CD8-positive, alpha-beta T cell (primary cell): ENCODE measurements at regions of chr17 and their contacts with region 1.

Region 1: DNA sequence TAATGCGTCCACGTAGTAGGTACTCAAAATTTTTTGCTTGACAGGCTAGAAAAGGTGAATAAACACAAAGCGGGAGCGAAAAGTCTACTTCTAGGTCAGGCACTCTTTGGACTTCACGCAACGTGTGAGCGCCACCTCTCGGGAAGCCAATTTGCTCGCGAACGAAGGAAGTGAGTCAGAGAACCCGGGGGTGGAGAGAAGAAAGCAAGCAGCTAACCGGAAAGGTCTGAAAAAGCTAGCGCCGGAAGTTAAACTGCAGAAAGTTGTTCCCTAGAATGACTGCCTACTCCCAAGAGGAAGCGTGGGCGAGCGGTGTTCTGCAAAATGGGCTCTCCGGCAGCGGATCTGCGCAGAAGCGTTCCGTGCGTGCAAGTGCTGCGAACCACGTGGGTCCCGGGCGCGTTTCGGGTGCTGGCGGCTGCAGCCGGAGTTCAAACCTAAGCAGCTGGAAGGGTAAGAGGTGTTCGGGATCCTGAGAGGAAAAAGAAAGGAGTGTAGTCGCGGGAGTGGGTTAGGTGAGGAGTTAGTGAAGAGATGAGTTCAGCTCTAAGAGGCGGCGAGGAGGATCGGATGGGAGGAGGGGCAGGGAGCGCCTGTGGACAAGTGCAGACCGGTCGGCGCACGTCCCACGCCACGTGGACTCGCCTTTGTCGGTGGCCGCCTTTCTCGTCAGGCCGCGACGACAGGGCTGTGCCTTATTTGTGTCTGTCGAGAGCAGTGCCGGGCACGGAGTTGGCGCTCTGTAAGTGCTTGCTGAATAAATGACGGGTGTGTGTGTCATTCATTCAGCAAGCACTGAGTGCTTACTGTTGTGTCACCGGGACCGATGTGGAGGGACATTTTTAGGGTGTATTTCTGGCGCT is at the start of gene NME1:
- DNase-seq: peak; percentile 94 to 99 (median 96)
- ATAC-seq: peak; percentile 92
- H3K4me3 ChIP-seq: peak within 1 kb of the TSS; percentile 70 to 75
- H3K4me3 Mint-ChIP-seq: no peak within 1 kb of the TSS
- H3K27ac ChIP-seq: peak within 1 kb of the TSS; percentile 58 to 77
- H3K27ac Mint-ChIP-seq: no peak within 1 kb of the TSS
- H3K4me1 ChIP-seq: peaks cover 22% of the 10 kb centered on the region
- H3K4me1 Mint-ChIP-seq: peaks cover 11% of the 10 kb centered on the region
- H3K27me3 ChIP-seq: no peaks in the 10 kb centered on the region
- H3K27me3 Mint-ChIP-seq: no peaks in the 10 kb centered on the region
- CTCF ChIP-seq: peak; percentile 67
- total RNA-seq, gene NME1: 11.3 to 12.1 TPM

Region 2: GRCh38 chr17:50783193-50783660 is 370.2 kb before region 1 on chr17:
- CTCF ChIA-PET with region 1: interaction called, 3 read pairs
- POLR2A ChIA-PET with region 1: no interaction called
- intact Hi-C with region 1: loop called (anchors 5 to 10 kb)
- DNase-seq: peak; percentile 62 to 87 (median 79)
- ATAC-seq: peak; percentile 81
- H3K4me3 ChIP-seq: no peak overlapping the region
- H3K4me3 Mint-ChIP-seq: no peak overlapping the region
- H3K27ac ChIP-seq: no peak overlapping the region
- H3K27ac Mint-ChIP-seq: no peak overlapping the region
- H3K4me1 ChIP-seq: peaks cover 19% of the 10 kb centered on the region
- H3K4me1 Mint-ChIP-seq: peaks cover 29% of the 10 kb centered on the region
- H3K27me3 ChIP-seq: no peaks in the 10 kb centered on the region
- H3K27me3 Mint-ChIP-seq: peaks cover 9% of the 10 kb centered on the region
- CTCF ChIP-seq: peak; percentile 92

Region 3: GRCh38 chr17:51000835-51001638 is 152.4 kb before region 1 on chr17:
- CTCF ChIA-PET with region 1: interaction called, 124 read pairs
- POLR2A ChIA-PET with region 1: interaction called, 23 read pairs
- intact Hi-C with region 1: loop called (anchors 1 kb)
- DNase-seq: peak in 3 of 9 experiments; percentile 14 to 81 (median 74)
- ATAC-seq: peak; percentile 88
- H3K4me3 ChIP-seq: no peak overlapping the region
- H3K4me3 Mint-ChIP-seq: no peak overlapping the region
- H3K27ac ChIP-seq: no peak overlapping the region
- H3K27ac Mint-ChIP-seq: no peak overlapping the region
- H3K4me1 ChIP-seq: no peaks in the 10 kb centered on the region
- H3K4me1 Mint-ChIP-seq: peaks cover 5% of the 10 kb centered on the region
- H3K27me3 ChIP-seq: no peaks in the 10 kb centered on the region
- H3K27me3 Mint-ChIP-seq: no peaks in the 10 kb centered on the region
- CTCF ChIP-seq: peak; percentile 76

Region 4: GRCh38 chr17:51056813-51057510 is 96.5 kb before region 1 on chr17:
- CTCF ChIA-PET with region 1: interaction called, 7 read pairs
- POLR2A ChIA-PET with region 1: no interaction called
- intact Hi-C with region 1: loop called in 1 of 2 experiments (anchors 5 kb)
- DNase-seq: peak in 2 of 9 experiments; percentile 46 to 61
- ATAC-seq: no peak
- H3K4me3 ChIP-seq: no peak overlapping the region
- H3K4me3 Mint-ChIP-seq: no peak overlapping the region
- H3K27ac ChIP-seq: no peak overlapping the region
- H3K27ac Mint-ChIP-seq: peak overlapping the region; percentile 50
- H3K4me1 ChIP-seq: no peaks in the 10 kb centered on the region
- H3K4me1 Mint-ChIP-seq: peaks cover 14% of the 10 kb centered on the region
- H3K27me3 ChIP-seq: no peaks in the 10 kb centered on the region
- H3K27me3 Mint-ChIP-seq: no peaks in the 10 kb centered on the region
- CTCF ChIP-seq: peak; percentile 48

Region 5: GRCh38 chr17:51166197-51166986 is 13.0 kb after region 1 on chr17 and contains the start of gene NME2:
- CTCF ChIA-PET with region 1: interaction called, 41 read pairs
- POLR2A ChIA-PET with region 1: interaction called, 17 read pairs
- intact Hi-C with region 1: loop called (anchors 1 kb)
- DNase-seq: peak; percentile 10 to 84 (median 59)
- ATAC-seq: peak; percentile 69
- H3K4me3 ChIP-seq: peak within 1 kb of the TSS; percentile 70 to 78
- H3K4me3 Mint-ChIP-seq: peak within 1 kb of the TSS; percentile 90
- H3K27ac ChIP-seq: peak within 1 kb of the TSS; percentile 52 to 84
- H3K27ac Mint-ChIP-seq: peak within 1 kb of the TSS; percentile 91
- H3K4me1 ChIP-seq: peaks cover 13% of the 10 kb centered on the region
- H3K4me1 Mint-ChIP-seq: peaks cover 23% of the 10 kb centered on the region
- H3K27me3 ChIP-seq: no peaks in the 10 kb centered on the region
- H3K27me3 Mint-ChIP-seq: no peaks in the 10 kb centered on the region
- CTCF ChIP-seq: no peak
- total RNA-seq, gene NME2: 165 to 168 TPM